ENCODE measurements at regions of chr1 and their contacts with region 1.

Region 1: GRCh38 chr1:52970149-52970548 is 43.1 kb downstream of the SCP2 start:
- DNase-seq: peak in 3 of 9 donors; percentile 1 to 19 (median 12)
- ATAC-seq: no peak
- H3K4me3 ChIP-seq: no peak overlapping the region
- H3K4me3 Mint-ChIP-seq: no peak overlapping the region
- H3K27ac ChIP-seq: no peak overlapping the region
- H3K27ac Mint-ChIP-seq: peak overlapping the region in 1 of 9 donors; percentile 58
- H3K4me1 ChIP-seq: no peaks in the 10 kb centered on the region
- H3K4me1 Mint-ChIP-seq: peaks cover 0 to 2% (median 0%) of the 10 kb centered on the region in 7 donors
- H3K27me3 ChIP-seq: no peaks in the 10 kb centered on the region
- H3K27me3 Mint-ChIP-seq: no peaks in the 10 kb centered on the region

Region 2: DNA sequence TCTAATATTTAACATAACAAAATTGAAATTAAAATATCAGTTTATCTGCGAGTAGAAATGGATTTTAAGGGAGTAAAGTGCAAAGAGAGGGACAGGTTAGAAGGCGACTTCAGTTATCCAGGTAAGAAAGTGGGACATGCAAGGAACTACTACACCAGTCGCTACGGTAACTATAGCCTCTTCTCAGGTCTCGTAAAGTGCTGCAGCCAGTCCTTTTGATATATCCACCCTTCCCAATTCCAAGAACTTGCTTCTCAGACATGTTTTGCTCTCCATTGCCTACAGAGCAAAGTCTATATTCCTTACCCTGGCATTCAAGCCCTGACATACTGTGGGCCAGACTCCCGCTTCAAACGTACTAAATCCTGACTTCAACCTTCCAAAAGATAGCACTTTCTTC is 274.5 kb before region 1 on chr1:
- CTCF ChIA-PET with region 1: no interaction called
- POLR2A ChIA-PET with region 1: no interaction called
- intact Hi-C with region 1: loop called in 1 of 2 experiments (anchors 1 kb)
- DNase-seq: no peak
- ATAC-seq: no peak
- H3K4me3 ChIP-seq: no peak overlapping the region
- H3K4me3 Mint-ChIP-seq: peak overlapping the region in 5 of 10 donors; percentile 7 to 59 (median 15)
- H3K27ac ChIP-seq: no peak overlapping the region
- H3K27ac Mint-ChIP-seq: peak overlapping the region in 1 of 9 donors; percentile 4
- H3K4me1 ChIP-seq: no peaks in the 10 kb centered on the region
- H3K4me1 Mint-ChIP-seq: peaks cover 12 to 42% (median 16%) of the 10 kb centered on the region in 7 donors
- H3K27me3 ChIP-seq: no peaks in the 10 kb centered on the region
- H3K27me3 Mint-ChIP-seq: peaks cover 0 to 3% (median 0%) of the 10 kb centered on the region in 5 donors

Region 3: GRCh38 chr1:52904927-52905698 is 65.0 kb before region 1 on chr1:
- CTCF ChIA-PET with region 1: no interaction called
- POLR2A ChIA-PET with region 1: no interaction called
- intact Hi-C with region 1: loop called in 1 of 2 experiments (anchors 1 kb)
- DNase-seq: peak in 6 of 9 donors; percentile 25 to 36 (median 30)
- ATAC-seq: peak; percentile 71
- H3K4me3 ChIP-seq: no peak overlapping the region
- H3K4me3 Mint-ChIP-seq: no peak overlapping the region
- H3K27ac ChIP-seq: no peak overlapping the region
- H3K27ac Mint-ChIP-seq: peak overlapping the region in 2 of 9 donors; percentile 22 to 66
- H3K4me1 ChIP-seq: no peaks in the 10 kb centered on the region
- H3K4me1 Mint-ChIP-seq: peaks cover 0 to 7% (median 0%) of the 10 kb centered on the region in 7 donors
- H3K27me3 ChIP-seq: no peaks in the 10 kb centered on the region
- H3K27me3 Mint-ChIP-seq: no peaks in the 10 kb centered on the region